Lower leg skin (tissue), 4 donors: ENCODE measurements at regions of chr2 and their contacts with region 1.

Region 1: DNA sequence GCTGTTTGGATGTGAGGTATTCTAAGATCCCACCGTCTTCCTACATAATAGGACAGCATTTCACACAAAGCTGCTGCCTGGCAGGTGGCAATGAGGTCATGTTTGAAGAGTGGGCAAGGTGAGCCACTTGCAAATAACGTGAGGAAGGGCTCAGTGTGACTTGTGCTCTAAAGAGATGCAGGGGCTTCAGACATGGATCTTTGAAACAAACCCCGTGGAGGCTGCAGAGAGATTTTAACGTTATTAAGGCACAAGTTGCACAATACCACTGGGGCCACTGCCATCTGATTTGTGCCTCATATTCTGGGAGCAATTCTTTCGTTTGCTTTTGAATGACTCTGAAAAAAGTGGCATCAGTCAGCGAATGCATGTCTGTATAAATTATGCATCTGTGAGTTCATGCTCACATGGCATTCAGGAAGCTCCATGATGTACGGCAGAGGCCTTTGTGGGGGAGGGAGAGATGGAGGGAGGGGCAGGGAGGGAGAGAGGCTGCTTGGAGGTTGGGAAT is 362.0 kb downstream of the SOX11 start:
- DNase-seq: no peak
- H3K4me3 ChIP-seq: no peak overlapping the region
- CTCF ChIP-seq: no peak
- POLR2A ChIP-seq: no peak

Region 2: GRCh38 chr2:5433855-5434254 is 620.4 kb before region 1 on chr2:
- intact Hi-C with region 1: loop called (anchors 5 kb)
- DNase-seq: no peak
- H3K4me3 ChIP-seq: no peak overlapping the region
- CTCF ChIP-seq: no peak
- POLR2A ChIP-seq: no peak

Region 3: DNA sequence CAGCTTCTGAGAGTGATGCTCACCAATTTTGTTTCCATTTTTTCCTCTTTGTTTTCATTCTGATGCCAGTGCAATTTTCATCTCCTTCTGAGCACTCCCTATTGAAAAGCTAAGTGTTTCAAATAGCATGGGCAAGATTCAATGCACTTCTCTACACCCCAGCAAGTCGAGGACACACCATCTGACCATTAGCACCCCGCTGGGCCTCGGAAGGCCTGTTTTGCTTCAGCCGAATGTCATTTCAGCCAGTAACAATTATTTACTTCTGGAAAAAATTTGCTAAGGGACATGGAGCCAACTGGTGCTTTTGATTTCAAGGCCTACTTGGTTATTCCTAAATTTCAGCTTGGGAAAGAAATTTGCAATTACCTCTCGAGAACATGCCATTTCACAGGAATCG is 1255.4 kb after region 1 on chr2:
- intact Hi-C with region 1: no loop called
- DNase-seq: no peak
- H3K4me3 ChIP-seq: no peak overlapping the region
- CTCF ChIP-seq: no peak
- POLR2A ChIP-seq: no peak